HepG2 (cell line): ENCODE measurements at regions of chr19 and their contacts with region 1.

Region 1: DNA sequence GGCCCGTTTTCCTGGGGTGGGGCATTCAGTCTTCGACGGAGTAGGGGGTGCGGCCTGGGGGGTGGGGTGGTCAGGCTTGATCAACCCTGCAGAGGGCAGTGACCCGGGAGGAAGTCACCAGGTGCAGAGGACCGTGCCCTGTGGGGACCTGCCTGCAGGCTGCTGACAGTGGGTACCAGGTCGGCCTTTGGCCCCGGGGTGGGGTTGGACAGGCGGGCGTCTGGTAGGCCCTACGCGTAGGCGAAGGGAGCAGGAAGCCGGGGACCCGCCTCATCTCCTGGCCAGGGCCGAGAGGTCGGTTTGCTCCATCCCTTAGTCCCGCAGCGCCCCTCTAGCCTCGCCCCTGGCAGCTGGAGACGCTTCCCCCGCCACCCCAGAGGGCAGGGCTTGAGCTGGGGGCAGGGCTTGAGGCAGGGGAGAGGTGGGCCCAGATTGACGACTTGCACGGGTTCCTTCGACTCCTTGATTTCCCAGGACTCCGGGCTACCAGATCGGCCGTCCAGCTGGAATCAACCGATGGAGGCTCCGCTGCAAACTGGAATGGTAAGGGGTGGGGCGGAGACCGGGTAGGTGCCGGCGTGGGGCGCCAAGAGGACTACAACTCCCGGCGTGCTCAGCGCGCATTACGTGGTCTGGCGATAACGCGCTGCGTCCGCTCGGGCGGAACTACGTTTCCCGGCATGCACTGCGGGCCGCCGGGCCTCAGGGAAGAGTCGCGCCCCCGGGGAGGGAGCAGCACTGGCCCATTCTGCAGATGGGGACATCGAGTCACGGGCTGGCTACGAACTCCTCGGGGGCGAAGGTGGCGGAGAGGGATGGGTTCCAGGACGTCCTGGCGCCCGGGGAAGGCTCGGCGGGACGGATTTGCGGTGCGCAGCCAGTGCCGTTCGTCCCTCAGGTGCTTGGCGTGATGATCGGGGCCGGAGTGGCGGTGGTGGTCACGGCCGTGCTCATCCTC is at the start of gene PNPLA6:
- DNase-seq: peak; percentile 76
- ATAC-seq: peak; percentile 85
- H3K4me3 ChIP-seq: peak within 1 kb of the TSS; percentile 91 to 97 (median 94)
- H3K27ac ChIP-seq: peak within 1 kb of the TSS; percentile 84
- H3K4me1 ChIP-seq: peaks cover 14% of the 10 kb centered on the region
- H3K27me3 ChIP-seq: no peaks in the 10 kb centered on the region; a peak in 1 of 5 replicates
- CTCF ChIP-seq: peak; percentile 34
- EP300 ChIP-seq: no peak
- POLR2A ChIP-seq: peak; percentile 42 to 53; a peak in 2 of 4 replicates
- RAD21 ChIP-seq: no peak; the same call in 1 of the 2 replicates
- total RNA-seq, gene PNPLA6: 11.1 and 28.2 TPM in 2 replicates

Region 2: GRCh38 chr19:7417671-7418324 is 117.5 kb before region 1 on chr19:
- CTCF ChIA-PET with region 1: no interaction called
- POLR2A ChIA-PET with region 1: no interaction called
- in situ Hi-C with region 1: no loop called
- intact Hi-C with region 1: no loop called
- DNase-seq: no peak
- ATAC-seq: no peak
- H3K4me3 ChIP-seq: no peak overlapping the region
- H3K27ac ChIP-seq: no peak overlapping the region
- H3K4me1 ChIP-seq: peaks cover 14% of the 10 kb centered on the region
- H3K27me3 ChIP-seq: no peaks in the 10 kb centered on the region
- CTCF ChIP-seq: no peak
- EP300 ChIP-seq: no peak
- POLR2A ChIP-seq: no peak
- RAD21 ChIP-seq: no peak

Region 3: GRCh38 chr19:7522072-7522922 is 13.0 kb before region 1 on chr19 and contains the start of gene MCOLN1:
- CTCF ChIA-PET with region 1: no interaction called
- POLR2A ChIA-PET with region 1: interaction called, 13 read pairs
- in situ Hi-C with region 1: no loop called
- intact Hi-C with region 1: no loop called
- DNase-seq: peak; percentile 91
- ATAC-seq: peak; percentile 81
- H3K4me3 ChIP-seq: peak within 1 kb of the TSS; percentile 68 to 81 (median 75)
- H3K27ac ChIP-seq: peak within 1 kb of the TSS; percentile 47
- H3K4me1 ChIP-seq: peaks cover 17% of the 10 kb centered on the region
- H3K27me3 ChIP-seq: no peaks in the 10 kb centered on the region
- CTCF ChIP-seq: 0 out of 2 replicates have a peak, but pooled peaks have one; percentile 23
- EP300 ChIP-seq: peak in 1 of 2 experiments; percentile 45; a peak in 2 of 4 replicates
- POLR2A ChIP-seq: peak in 1 of 2 experiments; percentile 66; a peak in 3 of 4 replicates
- RAD21 ChIP-seq: no peak; the same call in 1 of the 2 replicates
- total RNA-seq, gene MCOLN1: 1.9 and 3.4 TPM in 2 replicates

Region 4: GRCh38 chr19:7652061-7652641 is 116.8 kb after region 1 on chr19:
- CTCF ChIA-PET with region 1: no interaction called
- POLR2A ChIA-PET with region 1: no interaction called
- in situ Hi-C with region 1: no loop called
- intact Hi-C with region 1: no loop called
- DNase-seq: peak; percentile 96
- ATAC-seq: peak; percentile 88
- H3K4me3 ChIP-seq: peak overlapping the region in 1 of 3 experiments; percentile 31; a peak in 1 of 6 replicates
- H3K27ac ChIP-seq: peak overlapping the region; percentile 58
- H3K4me1 ChIP-seq: peaks cover 17% of the 10 kb centered on the region
- H3K27me3 ChIP-seq: no peaks in the 10 kb centered on the region
- CTCF ChIP-seq: peak; percentile 89
- EP300 ChIP-seq: peak; percentile 72 to 81; a peak in 3 of 4 replicates
- POLR2A ChIP-seq: no peak
- RAD21 ChIP-seq: peak; percentile 79